Dendritic cell treated with granulocyte-macrophage colony-stimulating factor and Interleukin-4, amounts not matched to agents 40 ng/mL and 50 ng/mL, for 4 days (primary cell): ENCODE measurements at regions of chr7 and their contacts with region 1.

Region 1: DNA sequence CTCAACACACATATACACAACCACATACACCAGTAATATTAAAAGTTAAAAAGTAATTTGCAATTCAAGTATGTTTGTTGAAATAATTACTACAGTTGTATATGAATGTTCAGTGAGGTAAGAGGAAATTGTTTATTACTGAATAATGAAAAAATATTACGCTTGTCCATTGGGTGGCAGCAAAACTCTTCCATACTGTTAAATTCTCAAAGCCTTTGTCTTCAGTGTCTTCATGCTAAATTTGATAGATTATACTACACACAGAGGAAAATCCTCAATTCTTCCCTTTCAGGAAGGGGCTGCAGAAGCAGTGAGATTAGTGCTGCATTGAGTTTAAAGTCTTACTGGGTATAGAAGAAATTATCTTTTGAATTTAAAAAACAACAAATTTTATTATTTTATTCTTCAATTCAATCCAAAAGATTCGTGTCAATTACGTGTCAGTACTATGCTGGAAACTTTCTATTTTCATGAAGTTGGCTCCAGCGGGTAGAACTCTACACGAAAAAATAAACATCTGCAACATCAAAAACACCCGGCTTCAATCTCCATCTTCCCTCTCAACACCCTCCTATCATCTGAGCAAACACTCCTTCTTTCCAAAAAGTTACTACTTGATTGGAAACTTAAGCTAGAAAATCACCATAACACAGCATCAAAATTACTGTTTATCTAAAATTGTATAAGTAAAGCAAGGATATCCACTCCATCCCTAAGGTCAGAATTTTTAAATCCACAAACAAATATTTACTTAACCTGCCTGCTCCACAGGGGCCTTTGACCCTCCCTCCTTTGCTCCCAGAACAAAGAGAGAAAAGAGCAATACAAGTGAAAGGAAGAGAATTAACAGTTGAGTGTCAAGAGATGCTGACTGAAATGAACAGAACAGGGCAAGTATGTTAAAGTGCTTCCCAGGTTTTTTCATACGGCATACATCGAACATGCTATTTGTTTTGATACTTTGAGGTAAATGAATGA is 37.0 kb upstream of the TES start:
- H3K4me3 Mint-ChIP-seq: no peak overlapping the region
- H3K27ac Mint-ChIP-seq: no peak overlapping the region
- H3K4me1 Mint-ChIP-seq: peaks cover 13% of the 10 kb centered on the region
- H3K27me3 Mint-ChIP-seq: peaks cover 4% of the 10 kb centered on the region

Region 2: DNA sequence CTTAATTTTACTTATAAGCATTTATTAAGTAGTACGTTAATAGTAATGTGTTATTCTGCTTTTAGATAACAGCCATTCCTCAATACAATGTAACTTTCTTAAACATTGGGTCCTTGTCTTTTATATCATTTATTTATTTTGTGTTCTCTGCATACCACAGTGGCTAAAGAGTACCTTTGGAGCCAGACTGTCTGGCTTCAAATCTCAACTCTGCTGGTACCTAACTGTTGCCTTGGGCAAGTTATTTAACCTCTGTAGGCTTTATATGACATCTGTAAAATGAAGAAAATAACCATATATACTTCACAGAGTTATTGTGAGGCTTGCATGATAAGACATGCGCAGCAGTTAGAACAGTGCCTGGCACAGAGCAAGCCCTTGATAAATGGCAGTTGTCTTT is 853.8 kb before region 1 on chr7:
- intact Hi-C with region 1: no loop called
- H3K4me3 Mint-ChIP-seq: no peak overlapping the region
- H3K27ac Mint-ChIP-seq: no peak overlapping the region
- H3K4me1 Mint-ChIP-seq: no peaks in the 10 kb centered on the region
- H3K27me3 Mint-ChIP-seq: no peaks in the 10 kb centered on the region

Region 3: GRCh38 chr7:116138202-116138801 is 35.0 kb before region 1 on chr7:
- intact Hi-C with region 1: loop called (anchors 2 kb)
- H3K4me3 Mint-ChIP-seq: no peak overlapping the region
- H3K27ac Mint-ChIP-seq: no peak overlapping the region
- H3K4me1 Mint-ChIP-seq: peaks cover 13% of the 10 kb centered on the region
- H3K27me3 Mint-ChIP-seq: peaks cover 2% of the 10 kb centered on the region

Region 4: GRCh38 chr7:116236020-116236630 is 62.8 kb after region 1 on chr7:
- intact Hi-C with region 1: loop called (anchors 2 kb)
- H3K4me3 Mint-ChIP-seq: no peak overlapping the region
- H3K27ac Mint-ChIP-seq: no peak overlapping the region
- H3K4me1 Mint-ChIP-seq: peaks cover 21% of the 10 kb centered on the region
- H3K27me3 Mint-ChIP-seq: no peaks in the 10 kb centered on the region

Region 5: GRCh38 chr7:116525913-116526861 is 352.8 kb after region 1 on chr7:
- intact Hi-C with region 1: loop called (anchors 10 kb)
- H3K4me3 Mint-ChIP-seq: peak overlapping the region; percentile 86
- H3K27ac Mint-ChIP-seq: no peak overlapping the region
- H3K4me1 Mint-ChIP-seq: peaks cover 31% of the 10 kb centered on the region
- H3K27me3 Mint-ChIP-seq: peaks cover 57% of the 10 kb centered on the region

Region 6: GRCh38 chr7:116588641-116589594 is 415.6 kb after region 1 on chr7:
- intact Hi-C with region 1: loop called (anchors 1 kb)
- H3K4me3 Mint-ChIP-seq: no peak overlapping the region
- H3K27ac Mint-ChIP-seq: no peak overlapping the region
- H3K4me1 Mint-ChIP-seq: peaks cover 30% of the 10 kb centered on the region
- H3K27me3 Mint-ChIP-seq: peaks cover 23% of the 10 kb centered on the region

Region 7: DNA sequence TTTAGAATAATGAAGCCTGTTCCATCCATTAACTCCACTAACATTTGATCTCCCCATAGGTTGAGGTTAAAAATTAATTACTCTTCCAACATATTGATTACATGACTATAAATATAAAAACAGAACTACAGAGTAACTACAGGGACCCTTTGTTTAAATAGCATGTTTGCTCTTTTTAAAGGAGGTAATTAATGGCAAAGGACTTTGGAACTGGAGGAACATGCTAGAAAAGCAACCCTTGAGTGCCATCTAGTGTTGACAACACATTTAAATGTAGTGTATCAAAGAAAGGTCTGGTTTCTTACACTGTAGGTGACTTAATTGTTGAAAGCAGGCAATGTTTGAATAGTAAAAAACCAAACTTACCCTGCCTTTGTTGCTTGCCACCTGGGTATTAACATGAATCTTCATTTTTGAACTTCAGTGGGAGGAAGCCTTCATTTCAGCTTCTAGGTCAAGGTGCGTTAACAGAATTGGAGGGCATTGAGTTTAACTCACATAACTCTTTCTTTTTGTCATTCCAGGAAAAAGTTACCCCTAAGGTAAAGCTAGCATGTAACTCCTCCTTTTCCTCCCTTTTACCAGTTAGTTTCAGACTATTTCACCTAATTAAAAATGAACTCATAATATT is 636.4 kb after region 1 on chr7:
- intact Hi-C with region 1: loop called (anchors 5 kb)
- H3K4me3 Mint-ChIP-seq: no peak overlapping the region
- H3K27ac Mint-ChIP-seq: no peak overlapping the region
- H3K4me1 Mint-ChIP-seq: peaks cover 10% of the 10 kb centered on the region
- H3K27me3 Mint-ChIP-seq: no peaks in the 10 kb centered on the region